ENCODE measurements at regions of chr4 and their contacts with region 1.

Region 1: DNA sequence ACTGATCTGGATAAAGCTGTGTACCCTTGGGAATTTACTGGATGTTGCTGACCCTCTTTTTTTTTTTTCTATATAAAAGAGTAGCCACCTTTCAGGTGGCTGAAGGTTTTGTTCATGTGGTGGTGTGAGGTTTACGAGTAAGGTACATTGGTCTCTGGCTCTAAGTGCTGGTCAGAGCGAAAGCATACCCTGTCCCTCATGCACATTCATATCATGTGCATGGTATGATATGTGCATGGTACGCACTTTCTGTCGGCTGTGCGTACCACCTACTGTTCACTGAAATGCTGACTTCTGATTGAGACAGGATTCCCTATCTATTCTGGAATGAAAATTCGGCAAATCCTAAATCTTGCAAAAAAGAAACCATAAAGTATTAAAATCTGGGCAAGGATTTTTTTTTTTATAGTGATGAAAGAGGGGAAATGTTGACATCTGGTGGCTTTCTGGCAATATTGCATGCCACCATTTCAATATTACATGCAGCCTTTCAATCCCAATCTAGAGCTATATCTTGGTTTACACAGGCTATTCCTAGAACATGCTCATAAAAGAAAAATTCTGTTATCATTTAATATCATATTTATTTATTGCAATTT is 32.8 kb downstream of the FAM149A start:
- DNase-seq: no peak
- H3K4me3 ChIP-seq: no peak overlapping the region
- H3K27ac ChIP-seq: no peak overlapping the region
- H3K4me1 ChIP-seq: peaks cover 0 to 8% (median 2%) of the 10 kb centered on the region in 4 donors
- H3K27me3 ChIP-seq: no peaks in the 10 kb centered on the region
- CTCF ChIP-seq: peak; percentile 69 to 77 (median 75)
- EP300 ChIP-seq: no peak
- POLR2A ChIP-seq: no peak

Region 2: GRCh38 chr4:186067757-186068385 is 69.4 kb before region 1 on chr4:
- in situ Hi-C with region 1: loop called in 1 of 4 experiments (anchors 5 kb)
- intact Hi-C with region 1: loop called (anchors 5 kb)
- DNase-seq: peak; percentile 80
- H3K4me3 ChIP-seq: peak overlapping the region in 3 of 4 donors; percentile 39 to 69 (median 53)
- H3K27ac ChIP-seq: peak overlapping the region; percentile 58 to 81 (median 80)
- H3K4me1 ChIP-seq: peaks cover 0 to 21% (median 5%) of the 10 kb centered on the region in 4 donors
- H3K27me3 ChIP-seq: no peaks in the 10 kb centered on the region
- CTCF ChIP-seq: peak; percentile 49 to 56 (median 51)
- EP300 ChIP-seq: no peak
- POLR2A ChIP-seq: no peak

Region 3: GRCh38 chr4:186074189-186074588 is 63.1 kb before region 1 on chr4:
- in situ Hi-C with region 1: loop called in 1 of 4 experiments (anchors 5 kb)
- intact Hi-C with region 1: loop called (anchors 5 kb)
- DNase-seq: no peak
- H3K4me3 ChIP-seq: no peak overlapping the region
- H3K27ac ChIP-seq: no peak overlapping the region
- H3K4me1 ChIP-seq: peaks cover 0 to 11% (median 5%) of the 10 kb centered on the region in 4 donors
- H3K27me3 ChIP-seq: no peaks in the 10 kb centered on the region
- CTCF ChIP-seq: no peak
- EP300 ChIP-seq: no peak
- POLR2A ChIP-seq: no peak

Region 4: DNA sequence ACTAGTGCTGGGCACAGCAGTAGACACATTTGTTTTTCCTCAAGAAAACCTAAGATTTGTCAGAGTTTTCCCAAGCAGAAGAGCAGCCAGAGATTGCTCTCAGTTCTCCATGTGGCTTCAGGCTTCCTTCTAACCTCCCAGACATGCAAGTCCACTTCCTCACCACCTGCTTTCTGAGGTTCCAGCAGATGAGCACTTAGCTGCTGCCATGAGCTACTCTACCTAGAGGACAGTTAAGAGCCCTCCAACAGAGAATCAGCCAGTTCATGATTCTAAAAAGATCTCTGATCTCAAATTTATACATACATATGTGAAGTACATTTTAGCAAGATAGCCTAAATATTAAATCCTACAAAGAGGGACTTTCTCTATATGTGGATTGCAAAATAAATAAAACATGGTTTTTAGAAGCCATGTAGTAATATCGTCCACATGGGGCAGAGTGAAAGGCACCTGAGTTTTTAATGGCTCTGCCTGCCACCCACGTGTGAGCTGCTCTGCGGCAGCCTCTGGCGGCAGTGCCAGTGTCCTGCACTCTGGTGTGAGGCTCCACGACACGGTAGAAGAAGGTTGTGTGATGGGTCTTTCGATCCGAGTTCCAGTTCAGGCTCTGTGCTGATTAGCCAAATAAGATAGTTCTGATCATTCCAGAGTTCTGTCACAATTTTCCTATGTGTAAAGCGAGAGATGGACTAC is 64.4 kb after region 1 on chr4:
- in situ Hi-C with region 1: no loop called
- intact Hi-C with region 1: no loop called
- DNase-seq: peak; percentile 71
- H3K4me3 ChIP-seq: no peak overlapping the region
- H3K27ac ChIP-seq: peak overlapping the region in 2 of 4 donors; percentile 20 to 31
- H3K4me1 ChIP-seq: peaks cover 0 to 12% (median 4%) of the 10 kb centered on the region in 4 donors
- H3K27me3 ChIP-seq: no peaks in the 10 kb centered on the region
- CTCF ChIP-seq: peak; percentile 65 to 88 (median 76)
- EP300 ChIP-seq: no peak
- POLR2A ChIP-seq: no peak